ENCODE measurements at regions of chr2 and their contacts with region 1.

Region 1: DNA sequence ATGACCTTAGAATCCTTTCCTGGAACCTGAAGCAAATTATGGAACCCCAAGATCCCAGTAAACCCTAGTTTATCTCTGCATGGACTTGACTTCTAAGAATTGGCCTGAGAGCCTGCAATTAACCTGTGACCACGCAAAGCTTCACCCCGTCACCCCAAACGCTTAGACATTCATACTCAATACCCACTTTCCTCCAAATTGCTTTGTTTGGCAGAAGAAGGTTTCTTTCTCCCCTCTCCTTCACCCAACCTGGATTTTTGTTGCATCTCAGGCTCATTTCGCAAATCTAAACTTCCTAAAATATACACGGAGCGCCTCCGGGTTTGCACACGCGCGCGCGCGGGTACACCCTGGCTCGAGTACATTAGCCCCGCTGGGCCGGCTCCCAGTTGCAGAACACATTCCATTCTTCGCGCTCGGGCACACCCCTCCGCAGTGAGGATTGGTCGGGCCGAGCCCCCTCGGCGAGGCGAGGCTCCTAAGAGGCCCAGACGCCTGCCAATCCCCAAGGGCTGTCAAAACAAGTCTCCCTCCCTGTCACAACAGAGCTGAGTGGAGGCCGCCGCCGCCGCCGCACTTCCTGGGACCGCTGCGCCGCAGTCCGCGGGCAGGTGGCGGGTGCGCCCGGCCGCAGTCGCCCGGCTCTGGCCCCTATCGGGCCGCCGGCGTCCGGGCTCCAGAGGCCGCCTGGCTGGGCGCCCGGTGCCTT is at the start of gene PLCL1:
- DNase-seq: peak; percentile 90
- H3K4me3 ChIP-seq: peak within 1 kb of the TSS; percentile 32 to 80 (median 62)
- H3K27ac ChIP-seq: peak within 1 kb of the TSS; percentile 64 to 78 (median 76)
- H3K4me1 ChIP-seq: peaks cover 6 to 18% (median 11%) of the 10 kb centered on the region in 4 donors
- H3K27me3 ChIP-seq: peaks cover 30% of the 10 kb centered on the region
- CTCF ChIP-seq: peak in 1 of 5 experiments; percentile 11
- EP300 ChIP-seq: no peak
- POLR2A ChIP-seq: no peak
- total RNA-seq, gene PLCL1: 0.20 to 7.1 (median 5.3) TPM

Region 2: DNA sequence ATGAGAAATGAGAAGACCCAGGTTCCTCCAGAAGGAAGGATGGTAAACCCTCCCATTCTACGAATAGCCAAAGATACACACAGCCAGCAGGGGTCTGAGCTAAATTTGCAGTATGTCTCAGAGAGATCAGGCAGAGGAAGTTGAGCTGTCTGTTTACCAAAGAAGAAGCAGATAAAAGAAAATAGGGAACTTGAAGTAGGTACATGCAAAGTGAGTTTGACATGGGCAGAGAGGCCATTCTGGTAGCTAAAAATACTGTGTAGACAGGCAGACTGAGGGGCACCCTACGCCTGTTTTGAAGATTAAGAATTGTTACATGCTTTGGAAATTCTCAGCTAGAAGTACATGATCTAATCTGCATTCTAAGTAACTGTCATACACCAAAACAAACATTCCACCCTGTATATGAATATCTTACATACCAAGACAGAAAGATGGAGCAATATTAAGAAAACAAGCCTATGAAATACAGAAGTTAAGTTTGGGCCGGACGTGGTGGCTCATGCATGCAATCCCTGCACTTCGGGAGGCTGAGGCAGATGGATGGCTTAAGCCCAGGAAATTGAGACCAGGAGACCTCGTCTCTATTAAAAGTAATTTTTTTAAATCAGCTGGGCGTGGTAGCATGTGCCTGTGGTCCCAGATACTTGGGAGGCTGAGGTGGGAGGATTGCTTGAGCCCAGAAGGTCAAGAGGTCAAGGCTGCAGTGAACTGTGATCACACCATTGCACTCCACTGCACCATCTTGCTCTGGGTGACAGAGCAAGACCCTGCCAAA is 651.6 kb before region 1 on chr2:
- in situ Hi-C with region 1: no loop called
- intact Hi-C with region 1: no loop called
- DNase-seq: no peak
- H3K4me3 ChIP-seq: no peak overlapping the region
- H3K27ac ChIP-seq: peak overlapping the region in 3 of 4 donors; percentile 28 to 66 (median 38)
- H3K4me1 ChIP-seq: peaks cover 0 to 41% (median 11%) of the 10 kb centered on the region in 4 donors
- H3K27me3 ChIP-seq: no peaks in the 10 kb centered on the region
- CTCF ChIP-seq: no peak
- EP300 ChIP-seq: no peak
- POLR2A ChIP-seq: no peak

Region 3: GRCh38 chr2:198127627-198128026 is 323.4 kb after region 1 on chr2:
- in situ Hi-C with region 1: loop called (anchors 10 to 25 kb)
- intact Hi-C with region 1: loop called (anchors 5 kb)
- DNase-seq: peak; percentile 17
- H3K4me3 ChIP-seq: no peak overlapping the region
- H3K27ac ChIP-seq: no peak overlapping the region
- H3K4me1 ChIP-seq: no peaks in the 10 kb centered on the region
- H3K27me3 ChIP-seq: no peaks in the 10 kb centered on the region
- CTCF ChIP-seq: peak; percentile 48 to 56 (median 54)
- EP300 ChIP-seq: no peak
- POLR2A ChIP-seq: no peak

Region 4: DNA sequence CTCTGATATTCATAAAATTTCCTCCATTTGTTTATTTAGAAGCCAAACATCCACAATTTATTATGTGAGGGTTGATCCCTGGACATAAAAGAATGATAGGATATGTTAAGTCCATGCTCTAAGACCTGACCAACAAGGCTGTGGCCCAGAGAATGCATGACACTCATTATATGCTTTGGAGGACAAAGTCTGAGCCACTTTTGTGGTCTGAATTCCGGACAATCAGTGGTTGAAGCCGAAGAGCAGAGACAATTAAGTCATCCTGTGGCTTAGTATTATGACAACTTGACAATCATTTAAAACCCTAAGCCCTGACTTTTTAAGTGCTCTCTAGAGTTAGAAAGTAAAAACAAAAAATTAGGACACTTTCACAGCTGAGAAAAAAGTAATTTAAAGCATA is 483.5 kb after region 1 on chr2:
- in situ Hi-C with region 1: loop called (anchors 5 to 10 kb)
- intact Hi-C with region 1: no loop called
- DNase-seq: no peak
- H3K4me3 ChIP-seq: no peak overlapping the region
- H3K27ac ChIP-seq: no peak overlapping the region
- H3K4me1 ChIP-seq: no peaks in the 10 kb centered on the region
- H3K27me3 ChIP-seq: peaks cover 21% of the 10 kb centered on the region
- CTCF ChIP-seq: no peak
- EP300 ChIP-seq: no peak
- POLR2A ChIP-seq: no peak

Region 5: GRCh38 chr2:198296665-198297308 is 492.6 kb after region 1 on chr2:
- in situ Hi-C with region 1: loop called in 3 of 4 experiments (anchors 10 kb)
- intact Hi-C with region 1: loop called (anchors 5 kb)
- DNase-seq: peak; percentile 40
- H3K4me3 ChIP-seq: no peak overlapping the region
- H3K27ac ChIP-seq: no peak overlapping the region
- H3K4me1 ChIP-seq: no peaks in the 10 kb centered on the region
- H3K27me3 ChIP-seq: peaks cover 5% of the 10 kb centered on the region
- CTCF ChIP-seq: peak; percentile 71 to 84 (median 80)
- EP300 ChIP-seq: no peak
- POLR2A ChIP-seq: no peak